A549 (cell line): ENCODE measurements at regions of chr2 and their contacts with region 1.

Region 1: GRCh38 chr2:70871398-70872211 is 36.0 kb upstream of the CD207 start:
- DNase-seq: peak; percentile 84 to 88
- ATAC-seq: peak; percentile 97 to 99
- H3K4me3 ChIP-seq: peak overlapping the region; percentile 32
- H3K27ac ChIP-seq: no peak overlapping the region
- H3K4me1 ChIP-seq: peaks cover 5% of the 10 kb centered on the region; the same call in 2 of the 3 replicates
- CTCF ChIP-seq: peak; percentile 98
- EP300 ChIP-seq: no peak
- POLR2A ChIP-seq: no peak
- RAD21 ChIP-seq: peak; percentile 97 to 98

Region 2: DNA sequence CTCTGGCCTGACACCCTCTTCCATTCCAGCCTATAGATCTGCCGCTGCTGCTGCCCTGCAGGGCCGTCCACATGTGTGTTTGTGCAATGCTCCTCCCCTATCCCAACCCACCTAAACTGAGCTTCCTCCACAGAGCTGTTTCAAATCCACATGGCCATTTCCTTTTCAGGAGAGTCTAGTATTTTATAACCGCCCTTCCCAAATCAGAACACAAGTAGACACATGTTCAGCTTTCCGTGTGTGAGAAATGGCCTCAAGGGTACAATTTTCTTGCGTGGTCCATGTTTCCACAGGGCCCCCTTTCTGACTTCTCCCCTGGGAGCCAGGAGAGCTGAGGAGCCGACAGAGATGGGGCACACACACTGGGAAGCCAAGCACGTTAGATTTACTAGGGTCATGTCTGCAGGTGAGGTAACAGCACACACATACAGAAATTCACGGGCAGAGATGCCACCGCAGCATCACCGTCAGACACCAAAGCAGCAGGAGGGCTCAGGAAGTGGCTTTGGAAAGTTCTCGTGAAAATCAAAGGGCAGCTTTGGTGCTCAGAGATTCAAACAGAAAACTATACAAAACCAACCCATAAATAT is 215.1 kb before region 1 on chr2:
- CTCF ChIA-PET with region 1: interaction called, 11 read pairs
- POLR2A ChIA-PET with region 1: no interaction called
- DNase-seq: no peak
- ATAC-seq: no peak
- H3K4me3 ChIP-seq: no peak overlapping the region
- H3K27ac ChIP-seq: no peak overlapping the region
- H3K4me1 ChIP-seq: no peaks in the 10 kb centered on the region
- CTCF ChIP-seq: no peak
- EP300 ChIP-seq: no peak
- POLR2A ChIP-seq: no peak
- RAD21 ChIP-seq: no peak

Region 3: GRCh38 chr2:70851704-70852103 is 19.9 kb before region 1 on chr2:
- CTCF ChIA-PET with region 1: interaction called, 43 read pairs
- POLR2A ChIA-PET with region 1: no interaction called
- DNase-seq: no peak
- ATAC-seq: no peak
- H3K4me3 ChIP-seq: no peak overlapping the region
- H3K27ac ChIP-seq: no peak overlapping the region
- H3K4me1 ChIP-seq: no peaks in the 10 kb centered on the region
- CTCF ChIP-seq: no peak
- EP300 ChIP-seq: no peak
- POLR2A ChIP-seq: no peak
- RAD21 ChIP-seq: no peak

Region 4: DNA sequence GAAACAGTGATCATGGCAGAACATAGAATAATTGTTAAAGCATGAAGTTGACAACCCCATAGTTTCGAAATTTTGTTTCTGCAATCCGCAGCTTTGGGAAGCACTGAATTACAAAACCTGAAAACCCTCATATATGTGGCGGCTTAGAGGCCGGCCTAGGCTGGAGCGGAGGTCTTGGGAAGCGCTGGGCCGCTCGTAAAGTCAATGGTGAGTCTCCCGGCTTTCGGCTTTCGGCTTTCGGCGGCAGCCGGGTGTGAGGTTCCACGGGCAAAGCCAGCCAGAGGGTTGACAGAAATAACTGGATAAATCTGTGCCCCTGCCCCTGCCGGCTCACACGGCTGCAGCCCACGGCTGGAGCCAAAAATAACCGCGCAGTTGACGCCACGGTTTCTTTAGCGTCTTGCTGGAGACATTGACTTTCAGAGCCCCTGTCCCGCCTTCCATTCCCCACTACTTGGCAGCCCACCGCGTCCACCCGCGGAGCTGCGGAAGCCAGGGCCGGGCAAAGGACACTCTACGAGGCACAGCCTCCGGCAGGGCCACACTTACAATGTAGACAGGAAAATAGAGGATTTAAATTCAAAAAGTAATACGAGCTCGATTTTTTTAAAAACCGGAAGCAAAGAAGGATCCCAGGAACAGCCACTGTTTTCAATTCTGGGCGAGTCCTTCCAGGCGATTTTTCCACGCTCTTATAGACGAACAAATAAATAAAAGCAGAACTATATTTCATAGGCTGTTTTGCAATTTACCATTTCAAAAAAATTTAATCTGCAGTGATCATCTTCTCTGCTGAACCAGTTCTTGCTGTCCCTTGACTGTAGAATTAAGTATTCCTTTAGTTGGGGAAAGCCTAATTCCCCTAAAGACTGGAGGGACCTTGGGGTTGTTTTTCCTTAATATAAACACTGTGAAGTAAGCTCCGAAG is 35.8 kb after region 1 on chr2:
- CTCF ChIA-PET with region 1: interaction called, 400 read pairs
- POLR2A ChIA-PET with region 1: no interaction called
- DNase-seq: no peak
- ATAC-seq: no peak
- H3K4me3 ChIP-seq: no peak overlapping the region
- H3K27ac ChIP-seq: no peak overlapping the region
- H3K4me1 ChIP-seq: peaks cover 6% of the 10 kb centered on the region
- CTCF ChIP-seq: no peak
- EP300 ChIP-seq: no peak
- POLR2A ChIP-seq: no peak
- RAD21 ChIP-seq: no peak

Region 5: DNA sequence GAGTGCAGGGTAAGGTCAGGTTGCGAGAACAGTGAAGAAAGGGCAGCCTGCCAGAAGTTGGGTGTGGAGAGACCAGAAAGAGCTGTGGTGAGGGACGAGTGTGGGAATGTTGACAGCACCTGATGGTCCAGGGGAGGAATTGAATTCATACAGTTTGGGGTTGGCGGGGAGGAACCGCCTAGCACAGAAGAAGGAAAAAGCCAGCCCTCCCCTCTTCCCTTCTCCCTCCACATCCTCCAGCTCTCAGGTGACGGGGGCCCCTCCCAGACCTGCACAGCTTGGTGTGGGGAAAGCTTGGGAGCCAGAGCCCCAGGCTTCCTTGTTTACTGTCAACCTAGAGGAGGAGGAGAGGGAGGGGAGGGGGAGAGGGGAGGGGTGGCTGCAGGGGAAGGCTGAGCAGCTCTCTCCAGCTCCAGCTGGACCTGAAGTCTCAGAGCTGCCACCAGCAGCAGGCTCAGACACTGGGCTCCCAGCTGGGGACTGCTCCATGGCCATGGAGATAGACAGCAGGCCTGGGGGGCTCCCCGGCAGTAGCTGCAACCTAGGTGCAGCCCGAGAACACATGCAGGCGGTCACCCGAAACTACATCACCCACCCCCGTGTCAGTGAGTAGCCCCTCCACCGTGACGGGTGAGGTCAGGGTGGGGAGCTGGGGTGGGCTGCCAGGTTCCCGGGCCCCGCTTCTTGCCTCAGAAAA is 64.0 kb after region 1 on chr2 and contains the start of gene ATP6V1B1:
- CTCF ChIA-PET with region 1: interaction called, 486 read pairs
- POLR2A ChIA-PET with region 1: no interaction called
- DNase-seq: no peak
- ATAC-seq: peak in 1 of 2 experiments; percentile 17; a peak in 2 of 6 replicates
- H3K4me3 ChIP-seq: no peak within 1 kb of the TSS
- H3K27ac ChIP-seq: no peak within 1 kb of the TSS
- H3K4me1 ChIP-seq: no peaks in the 10 kb centered on the region
- CTCF ChIP-seq: no peak
- EP300 ChIP-seq: no peak
- POLR2A ChIP-seq: no peak
- RAD21 ChIP-seq: no peak
- polyA plus RNA-seq, gene ATP6V1B1: 1.9 and 3.2 TPM in 2 replicates

Region 6: DNA sequence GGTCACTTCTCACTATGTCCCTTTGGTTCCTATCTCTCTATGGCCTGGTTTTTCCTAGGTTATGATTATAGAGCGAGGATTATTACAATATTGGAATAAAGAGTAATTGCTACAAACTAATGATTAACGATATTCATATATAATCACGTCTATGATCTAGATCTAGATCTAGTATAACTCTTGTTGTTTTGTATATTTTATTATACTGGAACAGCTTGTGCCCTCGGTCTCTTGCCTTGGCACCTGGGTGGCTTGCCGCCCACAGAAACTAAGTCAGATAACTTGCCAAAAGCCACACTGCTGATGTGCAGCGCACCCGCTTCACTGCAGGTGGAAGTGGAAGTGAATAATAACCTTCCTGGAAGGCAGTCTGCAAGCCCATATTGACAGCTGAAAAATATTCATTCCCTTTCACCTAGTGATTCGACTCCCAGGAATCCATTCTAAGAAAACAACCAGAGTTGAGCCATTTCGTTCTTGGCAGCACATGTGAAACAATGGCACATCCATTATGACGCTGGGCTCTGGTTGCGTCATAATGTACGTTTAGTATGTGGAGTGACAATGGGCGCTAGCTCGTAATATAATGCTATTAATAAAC is 106.1 kb after region 1 on chr2:
- CTCF ChIA-PET with region 1: interaction called, 82 read pairs
- POLR2A ChIA-PET with region 1: interaction called, 3 read pairs
- DNase-seq: no peak
- ATAC-seq: no peak
- H3K4me3 ChIP-seq: peak overlapping the region; percentile 55; the same call in 1 of the 3 replicates
- H3K27ac ChIP-seq: no peak overlapping the region
- H3K4me1 ChIP-seq: peaks cover 8% of the 10 kb centered on the region; the same call in 1 of the 3 replicates
- CTCF ChIP-seq: no peak; the same call in 1 of the 3 replicates
- EP300 ChIP-seq: no peak
- POLR2A ChIP-seq: no peak
- RAD21 ChIP-seq: no peak